ENCODE measurements at regions of chr20 and their contacts with region 1.

Region 1: GRCh38 chr20:61120595-61121515 is 131.2 kb upstream of the CDH4 start:
- DNase-seq: peak; percentile 83
- H3K4me3 Mint-ChIP-seq: no peak overlapping the region
- H3K27ac Mint-ChIP-seq: no peak overlapping the region
- H3K4me1 Mint-ChIP-seq: peaks cover 6% of the 10 kb centered on the region
- H3K27me3 Mint-ChIP-seq: peaks cover 41% of the 10 kb centered on the region
- CTCF ChIP-seq: peak; percentile 61

Region 2: DNA sequence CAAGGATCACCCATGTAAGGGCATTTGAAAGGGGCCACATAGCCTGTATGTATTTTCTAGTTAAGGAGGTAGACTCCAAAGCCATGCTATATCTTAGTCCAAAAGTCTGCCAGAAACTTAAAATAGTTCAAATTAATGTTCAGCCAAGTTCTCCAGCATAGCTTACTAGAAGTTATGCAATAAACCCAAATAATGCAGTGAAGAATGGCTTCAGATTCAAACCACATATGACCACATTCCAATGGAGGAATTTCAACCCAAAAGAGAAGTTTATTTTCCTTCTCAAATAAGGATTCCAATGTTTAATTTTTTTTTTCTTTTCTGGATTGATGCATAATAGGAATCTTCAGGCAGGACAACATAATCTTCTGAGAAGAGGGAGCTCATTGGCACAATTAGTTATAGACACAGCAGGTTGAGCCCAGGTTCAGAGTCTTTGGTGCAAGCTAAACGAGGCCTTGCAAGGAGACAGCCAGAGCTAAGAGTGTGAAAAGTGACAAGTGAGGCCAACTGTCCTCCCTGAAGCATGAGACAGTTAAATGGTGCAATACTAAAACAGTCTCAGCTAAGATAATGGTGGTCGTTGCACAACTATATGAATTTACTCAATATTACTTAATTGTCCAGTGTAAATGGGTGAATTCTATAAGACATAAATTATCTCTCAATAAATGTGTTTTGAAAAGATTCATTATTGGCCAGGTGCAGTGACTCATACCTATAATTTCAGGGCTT is 467.6 kb before region 1 on chr20:
- CTCF ChIA-PET with region 1: no interaction called
- POLR2A ChIA-PET with region 1: no interaction called
- intact Hi-C with region 1: no loop called
- DNase-seq: no peak
- H3K4me3 Mint-ChIP-seq: no peak overlapping the region
- H3K27ac Mint-ChIP-seq: no peak overlapping the region
- H3K4me1 Mint-ChIP-seq: no peaks in the 10 kb centered on the region
- H3K27me3 Mint-ChIP-seq: peaks cover 64% of the 10 kb centered on the region
- CTCF ChIP-seq: no peak

Region 3: GRCh38 chr20:60851826-60852704 is 268.8 kb before region 1 on chr20:
- CTCF ChIA-PET with region 1: interaction called, 3 read pairs
- POLR2A ChIA-PET with region 1: no interaction called
- intact Hi-C with region 1: loop called (anchors 1 kb)
- DNase-seq: peak; percentile 31
- H3K4me3 Mint-ChIP-seq: no peak overlapping the region
- H3K27ac Mint-ChIP-seq: no peak overlapping the region
- H3K4me1 Mint-ChIP-seq: no peaks in the 10 kb centered on the region
- H3K27me3 Mint-ChIP-seq: peaks cover 69% of the 10 kb centered on the region
- CTCF ChIP-seq: peak; percentile 79

Region 4: GRCh38 chr20:60993433-60994044 is 127.3 kb before region 1 on chr20:
- CTCF ChIA-PET with region 1: no interaction called
- POLR2A ChIA-PET with region 1: no interaction called
- intact Hi-C with region 1: loop called (anchors 1 kb)
- DNase-seq: peak; percentile 18
- H3K4me3 Mint-ChIP-seq: no peak overlapping the region
- H3K27ac Mint-ChIP-seq: no peak overlapping the region
- H3K4me1 Mint-ChIP-seq: no peaks in the 10 kb centered on the region
- H3K27me3 Mint-ChIP-seq: peaks cover 99% of the 10 kb centered on the region
- CTCF ChIP-seq: peak; percentile 28

Region 5: DNA sequence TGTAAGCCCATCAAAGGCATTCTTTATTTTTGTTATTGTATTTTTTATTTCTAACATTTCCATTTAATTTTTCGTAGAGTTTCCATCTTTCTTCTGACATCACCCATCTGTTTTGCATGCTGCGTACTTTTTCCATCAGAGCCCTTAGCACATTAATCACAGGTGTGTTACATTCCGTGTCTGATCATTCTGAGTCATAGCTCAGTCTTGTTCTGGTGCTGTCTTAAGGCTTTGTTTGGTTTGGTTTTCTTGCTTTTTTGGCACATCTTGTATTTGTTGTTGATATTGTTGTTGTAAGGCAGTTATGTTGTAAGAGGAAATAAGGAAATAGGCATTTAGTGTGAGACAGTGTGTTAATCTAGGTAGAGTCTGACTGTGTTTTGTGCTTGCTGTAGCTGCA is 83.4 kb before region 1 on chr20:
- CTCF ChIA-PET with region 1: interaction called, 3 read pairs
- POLR2A ChIA-PET with region 1: no interaction called
- intact Hi-C with region 1: loop called (anchors 5 kb)
- DNase-seq: peak; percentile 54
- H3K4me3 Mint-ChIP-seq: no peak overlapping the region
- H3K27ac Mint-ChIP-seq: no peak overlapping the region
- H3K4me1 Mint-ChIP-seq: peaks cover 10% of the 10 kb centered on the region
- H3K27me3 Mint-ChIP-seq: peaks cover 69% of the 10 kb centered on the region
- CTCF ChIP-seq: no peak

Region 6: DNA sequence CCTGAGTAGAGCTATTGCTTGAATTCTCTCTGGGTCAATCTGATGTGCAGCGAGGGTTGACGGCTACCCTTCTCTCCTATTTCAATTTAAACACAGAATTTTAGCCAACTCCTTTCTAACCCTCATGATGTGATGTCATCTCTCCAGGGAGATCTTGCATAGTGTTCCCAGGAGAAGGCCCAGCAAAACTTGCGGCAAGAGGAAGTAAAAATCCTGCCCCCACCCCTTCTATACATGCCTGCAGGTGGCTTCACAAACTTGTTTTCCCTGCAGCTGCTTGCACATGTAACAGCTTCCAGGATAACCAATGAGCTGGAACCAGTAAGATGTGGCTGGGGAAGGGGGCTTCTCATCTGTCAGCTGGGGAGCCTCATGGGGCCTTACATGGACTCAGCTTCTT is 38.1 kb before region 1 on chr20:
- CTCF ChIA-PET with region 1: no interaction called
- POLR2A ChIA-PET with region 1: no interaction called
- intact Hi-C with region 1: no loop called
- DNase-seq: no peak
- H3K4me3 Mint-ChIP-seq: no peak overlapping the region
- H3K27ac Mint-ChIP-seq: no peak overlapping the region
- H3K4me1 Mint-ChIP-seq: no peaks in the 10 kb centered on the region
- H3K27me3 Mint-ChIP-seq: peaks cover 100% of the 10 kb centered on the region
- CTCF ChIP-seq: no peak